Activated T-helper 1 cell treated with anti-CD3 and anti-CD28 coated beads, Interleukin-12 subunit alpha, Interleukin-12 subunit beta, Interleukin-2, Interleukin-4 antibody, amounts not matched to agents 30 ng/mL and 10 ng/mL and 1 ng/mL, durations not matched to agents 14 hours and 24 hours and 36 hours (primary cell): ENCODE measurements at regions of chr17 and their contacts with region 1.

Region 1: DNA sequence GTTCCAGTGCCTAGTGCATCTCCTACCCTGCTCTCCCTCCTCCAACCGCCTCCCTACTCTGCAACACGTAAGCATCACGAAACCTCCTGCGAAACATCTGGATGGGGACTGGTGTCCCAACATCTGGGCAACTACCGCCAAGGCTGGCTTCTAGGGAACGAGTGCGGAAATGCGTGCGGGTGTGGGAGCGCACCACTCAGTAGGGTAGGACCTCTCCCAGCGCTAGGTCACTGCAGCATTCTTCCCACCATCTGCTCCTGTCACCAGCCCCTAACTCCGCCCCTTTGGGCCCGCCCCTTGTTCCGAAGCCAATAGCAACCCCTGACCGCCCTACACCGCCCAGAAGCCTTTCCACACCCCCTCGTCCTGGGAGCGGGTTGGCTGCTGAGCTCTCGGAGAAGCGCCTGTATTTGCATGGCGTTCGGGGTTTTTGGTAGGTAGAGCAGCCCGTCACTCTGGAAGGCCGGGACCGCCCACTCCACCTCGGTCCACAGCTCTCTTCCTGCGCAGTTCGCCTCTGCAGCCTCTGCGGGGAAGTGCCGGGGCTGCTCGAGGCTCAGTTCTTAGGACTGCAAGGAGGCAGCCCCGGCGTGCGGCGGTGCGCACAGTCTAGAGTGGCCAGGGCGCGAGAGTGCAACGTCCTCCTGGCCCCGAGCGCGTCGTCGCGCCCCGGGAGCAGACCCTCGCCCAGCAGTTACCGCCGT is at the start of gene HS3ST3B1:
- DNase-seq: peak; percentile 100
- H3K4me3 Mint-ChIP-seq: peak within 1 kb of the TSS; percentile 93
- H3K27ac Mint-ChIP-seq: peak within 1 kb of the TSS; percentile 98
- H3K4me1 Mint-ChIP-seq: peaks cover 66% of the 10 kb centered on the region
- H3K27me3 Mint-ChIP-seq: peaks cover 20% of the 10 kb centered on the region
- total RNA-seq, gene HS3ST3B1: 32.3 and 33.8 TPM in 2 replicates

Region 2: DNA sequence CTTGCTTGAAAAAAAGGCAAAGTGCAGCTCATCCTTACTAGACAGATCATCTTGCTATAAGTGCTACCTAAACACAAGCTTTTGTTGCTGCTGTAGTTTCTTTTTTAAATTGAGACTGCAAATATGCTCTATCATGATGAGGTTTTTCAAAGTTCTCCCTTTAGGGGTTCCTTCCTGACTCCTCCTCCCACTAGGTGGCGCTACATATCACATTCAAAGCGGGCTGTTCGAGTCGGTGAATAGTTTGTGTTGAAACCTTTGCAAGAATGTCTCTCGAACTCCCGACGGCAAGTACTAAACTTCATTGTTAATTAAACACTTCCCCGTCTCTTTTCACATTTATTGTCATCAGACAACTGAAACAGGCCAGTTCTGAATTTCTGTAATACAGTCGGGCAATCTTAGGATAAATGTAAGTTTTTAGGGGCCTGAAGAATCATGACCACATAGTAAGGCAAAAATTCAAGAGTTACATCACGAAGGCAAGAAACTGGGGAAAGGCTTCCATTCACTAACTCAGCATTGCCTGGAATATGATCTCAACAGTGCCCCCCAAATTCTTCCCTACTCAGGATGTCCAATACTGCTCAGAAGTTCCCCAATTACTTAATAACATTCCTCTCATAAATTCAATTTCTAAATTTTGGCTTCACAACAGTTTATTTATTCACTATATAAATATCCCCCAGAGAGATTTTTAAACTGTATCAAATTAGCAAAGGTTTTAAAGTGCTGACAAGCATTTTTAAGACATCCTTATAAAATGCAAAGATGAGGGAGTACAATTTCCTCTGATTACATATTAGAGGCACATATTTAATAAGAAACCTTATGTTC is 705.7 kb before region 1 on chr17:
- intact Hi-C with region 1: loop called (anchors 1 kb)
- DNase-seq: peak; percentile 68
- H3K4me3 Mint-ChIP-seq: no peak overlapping the region
- H3K27ac Mint-ChIP-seq: no peak overlapping the region
- H3K4me1 Mint-ChIP-seq: peaks cover 7% of the 10 kb centered on the region
- H3K27me3 Mint-ChIP-seq: peaks cover 44% of the 10 kb centered on the region

Region 3: DNA sequence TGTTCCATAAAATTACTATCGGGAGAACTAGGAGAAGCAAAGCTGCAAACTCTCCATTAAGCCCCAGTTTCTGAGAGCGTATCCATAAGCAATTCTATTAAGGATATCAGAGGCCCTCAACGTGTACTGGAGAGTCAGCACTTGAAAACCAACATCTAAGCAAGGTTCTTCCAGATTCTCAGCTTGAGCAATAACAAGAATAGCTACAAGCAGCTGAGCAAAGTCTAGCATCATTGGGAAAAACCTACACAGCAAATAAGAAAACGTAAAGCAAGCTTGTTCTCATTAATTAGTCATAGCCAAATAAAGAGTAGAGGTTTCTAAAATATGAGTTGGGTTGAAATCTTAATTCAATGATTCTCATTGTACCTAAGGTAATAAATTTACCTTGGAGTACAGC is 258.3 kb before region 1 on chr17:
- intact Hi-C with region 1: loop called (anchors 1 kb)
- DNase-seq: no peak
- H3K4me3 Mint-ChIP-seq: no peak overlapping the region
- H3K27ac Mint-ChIP-seq: no peak overlapping the region
- H3K4me1 Mint-ChIP-seq: peaks cover 65% of the 10 kb centered on the region
- H3K27me3 Mint-ChIP-seq: no peaks in the 10 kb centered on the region

Region 4: GRCh38 chr17:14203388-14203787 is 97.3 kb before region 1 on chr17:
- intact Hi-C with region 1: loop called (anchors 1 kb)
- DNase-seq: peak; percentile 32
- H3K4me3 Mint-ChIP-seq: peak overlapping the region; percentile 24
- H3K27ac Mint-ChIP-seq: peak overlapping the region; percentile 85
- H3K4me1 Mint-ChIP-seq: peaks cover 90% of the 10 kb centered on the region
- H3K27me3 Mint-ChIP-seq: no peaks in the 10 kb centered on the region

Region 5: DNA sequence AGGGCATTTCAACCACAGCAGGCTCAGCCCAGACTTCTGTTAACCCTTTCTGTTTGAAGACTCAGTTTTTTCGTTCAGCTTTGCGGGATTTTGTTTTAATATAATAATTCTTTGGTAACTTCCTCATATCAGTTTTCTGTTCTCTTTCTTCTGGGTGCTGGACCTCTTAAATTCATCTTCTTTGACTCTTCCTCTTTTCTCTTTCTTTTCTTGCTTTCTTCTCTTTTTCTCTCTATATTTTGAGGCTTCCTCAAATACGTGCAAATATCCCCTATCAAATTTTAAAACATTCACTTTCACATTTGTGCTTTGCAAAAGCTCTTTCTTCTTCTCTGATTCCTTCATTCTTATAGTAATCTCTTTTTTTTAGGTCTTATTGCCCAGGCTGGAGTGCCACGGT is 136.4 kb after region 1 on chr17:
- intact Hi-C with region 1: no loop called
- DNase-seq: no peak
- H3K4me3 Mint-ChIP-seq: no peak overlapping the region
- H3K27ac Mint-ChIP-seq: no peak overlapping the region
- H3K4me1 Mint-ChIP-seq: peaks cover 4% of the 10 kb centered on the region
- H3K27me3 Mint-ChIP-seq: peaks cover 6% of the 10 kb centered on the region

Region 6: DNA sequence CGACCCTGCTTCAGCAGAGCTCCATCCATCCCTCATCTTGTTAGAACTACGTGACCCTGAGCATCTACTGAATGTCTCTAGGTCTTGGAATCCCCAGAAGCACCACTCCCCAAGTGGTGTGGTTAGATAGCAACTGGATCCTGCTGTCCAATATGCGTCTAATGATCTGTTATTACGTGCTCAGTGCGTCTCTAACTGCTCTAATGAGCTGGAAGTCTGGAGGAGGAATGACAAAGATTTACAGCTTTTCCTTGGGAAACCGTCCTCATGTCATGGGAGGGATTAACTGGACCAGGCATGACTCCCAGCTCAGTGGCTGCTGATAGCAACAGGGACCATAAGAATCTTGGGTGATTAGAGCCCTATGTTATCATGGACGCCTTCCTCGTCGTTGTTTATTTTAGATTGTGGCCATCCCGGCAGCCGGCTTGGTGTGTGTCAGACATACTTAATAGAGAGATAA is 151.0 kb after region 1 on chr17:
- intact Hi-C with region 1: no loop called
- DNase-seq: no peak
- H3K4me3 Mint-ChIP-seq: no peak overlapping the region
- H3K27ac Mint-ChIP-seq: no peak overlapping the region
- H3K4me1 Mint-ChIP-seq: no peaks in the 10 kb centered on the region
- H3K27me3 Mint-ChIP-seq: peaks cover 7% of the 10 kb centered on the region

Region 7: DNA sequence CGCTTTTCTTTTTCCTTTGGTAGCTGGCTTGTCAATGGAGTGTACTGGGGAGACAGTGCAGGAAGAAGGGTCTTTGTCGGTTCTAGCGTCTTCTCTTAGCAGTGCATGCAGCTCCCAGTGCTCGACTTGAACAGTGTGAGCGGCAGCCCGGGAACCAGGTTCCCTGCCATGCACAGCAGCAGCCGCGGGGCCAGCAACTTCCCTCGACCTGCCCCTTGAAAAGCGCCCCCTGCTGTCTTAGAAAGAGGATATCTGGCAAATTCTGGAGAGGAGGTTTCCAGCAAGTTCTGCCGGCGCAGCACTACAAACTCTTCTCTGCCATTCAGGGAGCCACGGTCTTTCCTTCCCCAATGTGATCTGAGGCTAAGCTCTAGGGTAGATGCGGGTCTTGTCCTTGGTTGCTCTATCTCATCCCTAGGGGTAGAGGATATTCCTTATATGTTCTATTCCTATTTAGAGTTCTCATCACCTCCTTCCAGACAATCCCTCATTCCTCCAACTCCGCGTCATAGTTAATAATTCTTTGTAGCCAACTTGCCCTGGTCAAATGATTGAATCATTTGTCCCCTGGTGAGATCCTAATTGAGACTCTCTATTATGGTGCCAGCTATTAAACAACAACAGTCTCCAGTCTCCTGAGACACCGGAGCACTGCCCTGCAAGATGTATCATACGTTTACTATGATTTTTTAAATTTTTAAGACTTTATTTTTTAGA is 513.1 kb after region 1 on chr17:
- intact Hi-C with region 1: loop called (anchors 10 kb)
- DNase-seq: no peak
- H3K4me3 Mint-ChIP-seq: no peak overlapping the region
- H3K27ac Mint-ChIP-seq: no peak overlapping the region
- H3K4me1 Mint-ChIP-seq: peaks cover 5% of the 10 kb centered on the region
- H3K27me3 Mint-ChIP-seq: peaks cover 4% of the 10 kb centered on the region